ENCODE measurements at regions of chr17 and their contacts with region 1.

Region 1: GRCh38 chr17:38351412-38352222 is at the start of gene SOCS7:
- DNase-seq: peak; percentile 94
- ATAC-seq: peak; percentile 92
- H3K4me3 Mint-ChIP-seq: peak within 1 kb of the TSS; percentile 80
- H3K27ac Mint-ChIP-seq: peak within 1 kb of the TSS; percentile 97
- H3K4me1 Mint-ChIP-seq: peaks cover 40% of the 10 kb centered on the region
- H3K27me3 Mint-ChIP-seq: no peaks in the 10 kb centered on the region
- CTCF ChIP-seq: no peak
- total RNA-seq, gene SOCS7: 18.0 to 18.9 TPM

Region 2: DNA sequence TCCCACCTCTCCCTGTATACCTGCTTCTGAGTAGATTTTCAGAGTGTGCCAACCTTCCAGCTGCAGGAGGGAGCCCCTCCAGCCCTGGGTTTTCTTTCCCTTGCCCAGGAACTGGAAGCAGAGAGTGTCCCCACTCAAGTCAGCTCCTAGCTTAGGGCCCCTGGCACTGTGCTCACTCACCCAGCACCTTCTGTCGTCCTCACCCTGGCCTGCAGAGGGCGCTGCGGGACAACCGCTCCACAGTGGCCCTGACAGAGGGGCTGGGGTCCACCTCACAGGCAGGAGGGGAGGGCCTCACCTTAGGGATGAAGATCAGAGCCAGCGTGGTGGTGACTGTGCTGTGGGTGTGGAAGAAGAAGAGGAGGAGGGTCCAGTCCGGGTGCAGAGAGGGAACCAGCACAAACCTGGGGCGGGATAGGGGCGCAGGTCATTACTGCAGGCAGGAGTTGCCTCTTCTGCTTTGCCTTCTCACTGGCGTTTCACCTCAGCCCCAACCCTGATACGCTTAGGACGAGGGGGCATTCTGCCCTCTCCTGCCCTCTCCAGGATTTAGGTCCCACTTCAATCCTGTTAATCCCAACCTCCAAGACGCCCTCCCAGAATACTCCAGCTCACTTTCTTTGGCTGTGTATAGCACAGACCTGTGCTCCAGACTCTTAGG is 17.9 kb before region 1 on chr17:
- CTCF ChIA-PET with region 1: interaction called, 31 read pairs
- POLR2A ChIA-PET with region 1: interaction called, 4 read pairs
- intact Hi-C with region 1: no loop called
- DNase-seq: peak; percentile 77
- ATAC-seq: peak; percentile 91
- H3K4me3 Mint-ChIP-seq: no peak overlapping the region
- H3K27ac Mint-ChIP-seq: no peak overlapping the region
- H3K4me1 Mint-ChIP-seq: no peaks in the 10 kb centered on the region
- H3K27me3 Mint-ChIP-seq: no peaks in the 10 kb centered on the region
- CTCF ChIP-seq: peak; percentile 82

Region 3: GRCh38 chr17:38379438-38379837 is 27.8 kb after region 1 on chr17:
- CTCF ChIA-PET with region 1: interaction called, 21 read pairs
- POLR2A ChIA-PET with region 1: no interaction called
- intact Hi-C with region 1: no loop called
- DNase-seq: no peak
- ATAC-seq: no peak
- H3K4me3 Mint-ChIP-seq: no peak overlapping the region
- H3K27ac Mint-ChIP-seq: no peak overlapping the region
- H3K4me1 Mint-ChIP-seq: no peaks in the 10 kb centered on the region
- H3K27me3 Mint-ChIP-seq: no peaks in the 10 kb centered on the region
- CTCF ChIP-seq: no peak

Region 4: GRCh38 chr17:38428112-38428642 is 76.6 kb after region 1 on chr17 and contains the start of gene ARHGAP23:
- CTCF ChIA-PET with region 1: interaction called, 12 read pairs
- POLR2A ChIA-PET with region 1: no interaction called
- intact Hi-C with region 1: no loop called
- DNase-seq: peak; percentile 43
- ATAC-seq: peak; percentile 55
- H3K4me3 Mint-ChIP-seq: peak within 1 kb of the TSS; percentile 59
- H3K27ac Mint-ChIP-seq: no peak within 1 kb of the TSS
- H3K4me1 Mint-ChIP-seq: peaks cover 8% of the 10 kb centered on the region
- H3K27me3 Mint-ChIP-seq: peaks cover 28% of the 10 kb centered on the region
- CTCF ChIP-seq: no peak
- total RNA-seq, gene ARHGAP23: 0.40 to 0.47 TPM

Region 5: GRCh38 chr17:38544839-38545209 is 193.2 kb after region 1 on chr17:
- CTCF ChIA-PET with region 1: no interaction called
- POLR2A ChIA-PET with region 1: no interaction called
- intact Hi-C with region 1: no loop called
- DNase-seq: no peak
- ATAC-seq: no peak
- H3K4me3 Mint-ChIP-seq: no peak overlapping the region
- H3K27ac Mint-ChIP-seq: no peak overlapping the region
- H3K4me1 Mint-ChIP-seq: no peaks in the 10 kb centered on the region
- H3K27me3 Mint-ChIP-seq: peaks cover 14% of the 10 kb centered on the region
- CTCF ChIP-seq: no peak

Region 6: GRCh38 chr17:38636054-38636453 is 284.4 kb after region 1 on chr17:
- CTCF ChIA-PET with region 1: no interaction called
- POLR2A ChIA-PET with region 1: no interaction called
- intact Hi-C with region 1: no loop called
- DNase-seq: no peak
- ATAC-seq: no peak
- H3K4me3 Mint-ChIP-seq: no peak overlapping the region
- H3K27ac Mint-ChIP-seq: no peak overlapping the region
- H3K4me1 Mint-ChIP-seq: no peaks in the 10 kb centered on the region
- H3K27me3 Mint-ChIP-seq: peaks cover 15% of the 10 kb centered on the region
- CTCF ChIP-seq: no peak

Measured in activated CD8-positive, alpha-beta T cell treated with anti-CD3 and anti-CD28 coated beads for 36 hours (primary cell).